IMR-90 (cell line): ENCODE measurements at regions of chr18 and their contacts with region 1.

Region 1: DNA sequence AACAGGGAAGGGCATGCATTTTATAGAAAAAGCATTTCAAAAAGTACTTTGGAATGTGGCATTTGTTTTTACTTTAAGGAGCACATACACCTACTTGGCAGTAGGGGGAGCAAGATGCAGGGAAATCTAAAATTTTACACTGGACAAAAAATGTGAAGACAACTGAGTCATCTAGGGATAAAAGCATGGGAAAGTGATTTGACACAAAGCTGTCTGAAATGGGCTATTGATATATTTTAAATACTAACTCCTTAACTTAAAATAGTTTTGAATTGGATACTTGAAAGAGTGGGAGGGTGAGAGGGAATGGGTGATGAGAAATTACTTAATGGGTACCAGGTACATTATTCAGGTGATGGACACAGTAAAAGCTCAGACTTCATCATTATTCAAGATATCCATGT is 15.8 kb downstream of the TMEM200C start:
- DNase-seq: peak; percentile 65
- ATAC-seq: peak; percentile 89
- H3K4me3 ChIP-seq: no peak overlapping the region
- H3K27ac ChIP-seq: no peak overlapping the region
- H3K4me1 ChIP-seq: no peaks in the 10 kb centered on the region
- H3K27me3 ChIP-seq: peaks cover 3% of the 10 kb centered on the region
- CTCF ChIP-seq: peak; percentile 93
- POLR2A ChIP-seq: no peak
- RAD21 ChIP-seq: peak; percentile 93

Region 2: DNA sequence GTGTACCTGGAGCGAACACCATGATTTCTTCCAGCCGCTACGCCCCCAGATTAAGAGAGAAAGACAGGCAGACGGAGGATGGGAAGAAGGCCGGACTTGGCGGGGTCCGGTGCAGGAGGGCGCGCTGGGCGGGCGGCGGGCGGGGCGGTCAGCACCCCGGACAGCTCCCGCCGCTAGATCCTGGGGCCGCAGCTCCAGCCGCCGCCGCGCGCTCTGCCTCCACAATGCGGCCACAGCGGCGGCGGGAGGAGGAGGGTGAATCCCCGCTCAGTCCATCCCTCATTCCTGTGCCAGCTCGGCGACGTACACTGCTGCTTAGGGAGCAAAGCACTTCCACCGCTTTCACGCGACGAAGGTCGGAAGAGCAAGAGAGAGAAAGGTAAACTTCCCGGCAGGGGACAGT is 682.4 kb before region 1 on chr18 and contains the start of gene AKAIN1:
- CTCF ChIA-PET with region 1: no interaction called
- POLR2A ChIA-PET with region 1: no interaction called
- dilution Hi-C with region 1: no loop called
- in situ Hi-C with region 1: no loop called
- intact Hi-C with region 1: no loop called
- DNase-seq: peak; percentile 18
- ATAC-seq: peak; percentile 100
- H3K4me3 ChIP-seq: no peak within 1 kb of the TSS
- H3K27ac ChIP-seq: no peak within 1 kb of the TSS
- H3K4me1 ChIP-seq: no peaks in the 10 kb centered on the region
- H3K27me3 ChIP-seq: peaks cover 6% of the 10 kb centered on the region; the same call in 1 of the 2 replicates
- CTCF ChIP-seq: no peak
- POLR2A ChIP-seq: no peak
- RAD21 ChIP-seq: no peak
- total RNA-seq, gene AKAIN1: not detected in 2 replicates

Region 3: GRCh38 chr18:6401687-6402086 is 522.2 kb after region 1 on chr18:
- CTCF ChIA-PET with region 1: no interaction called
- POLR2A ChIA-PET with region 1: no interaction called
- dilution Hi-C with region 1: no loop called
- in situ Hi-C with region 1: no loop called
- intact Hi-C with region 1: loop called (anchors 10 kb)
- DNase-seq: no peak
- ATAC-seq: no peak; the same call in 1 of the 2 replicates
- H3K4me3 ChIP-seq: no peak overlapping the region
- H3K27ac ChIP-seq: no peak overlapping the region
- H3K4me1 ChIP-seq: no peaks in the 10 kb centered on the region
- H3K27me3 ChIP-seq: no peaks in the 10 kb centered on the region
- CTCF ChIP-seq: peak; percentile 14; the same call in 1 of the 2 replicates
- POLR2A ChIP-seq: no peak
- RAD21 ChIP-seq: no peak

Region 4: DNA sequence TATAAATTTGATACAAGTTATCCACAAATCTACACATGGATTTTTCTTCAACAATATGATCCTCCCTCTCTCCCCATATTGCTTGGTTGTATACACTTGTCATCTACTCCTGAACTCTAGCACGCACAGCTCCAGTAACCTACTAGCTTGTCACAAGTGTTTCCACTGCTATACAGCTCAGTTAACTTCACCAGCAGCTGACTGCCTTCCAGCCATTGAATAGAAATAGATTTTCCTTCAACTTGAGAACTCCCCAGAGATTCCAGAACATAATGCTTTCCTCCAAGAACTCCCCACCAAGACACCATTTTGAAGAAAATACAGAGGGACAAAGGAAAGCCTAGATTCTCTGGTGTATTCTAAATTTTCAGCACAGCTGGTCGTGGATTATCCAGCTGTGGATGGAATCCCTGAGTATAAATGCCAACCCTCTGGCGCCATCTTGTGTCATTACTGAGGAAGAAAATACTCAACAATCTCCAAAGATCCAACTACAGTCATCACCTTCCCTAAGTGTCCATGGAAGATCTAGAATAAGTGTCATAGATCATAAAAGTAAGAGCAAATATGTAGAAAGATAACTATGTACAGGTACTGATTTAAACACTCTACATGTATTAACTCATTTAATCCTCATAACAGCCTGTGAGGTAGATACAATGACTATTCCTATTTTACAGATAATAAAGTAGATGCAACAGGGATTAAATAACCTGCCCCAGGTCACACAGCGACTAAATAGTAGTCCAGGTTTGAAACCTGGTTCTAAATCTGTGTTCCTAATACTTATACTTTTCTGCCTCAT is 1006.7 kb after region 1 on chr18:
- CTCF ChIA-PET with region 1: no interaction called
- POLR2A ChIA-PET with region 1: no interaction called
- dilution Hi-C with region 1: no loop called
- in situ Hi-C with region 1: loop called (anchors 10 kb)
- intact Hi-C with region 1: loop called (anchors 5 kb)
- DNase-seq: peak; percentile 59
- ATAC-seq: peak; percentile 83
- H3K4me3 ChIP-seq: no peak overlapping the region
- H3K27ac ChIP-seq: no peak overlapping the region; the same call in 1 of the 2 replicates
- H3K4me1 ChIP-seq: peaks cover 3% of the 10 kb centered on the region
- H3K27me3 ChIP-seq: no peaks in the 10 kb centered on the region
- CTCF ChIP-seq: peak; percentile 88
- POLR2A ChIP-seq: 0 out of 2 replicates have a peak, but pooled peaks have one; percentile 40
- RAD21 ChIP-seq: peak; percentile 97

Region 5: DNA sequence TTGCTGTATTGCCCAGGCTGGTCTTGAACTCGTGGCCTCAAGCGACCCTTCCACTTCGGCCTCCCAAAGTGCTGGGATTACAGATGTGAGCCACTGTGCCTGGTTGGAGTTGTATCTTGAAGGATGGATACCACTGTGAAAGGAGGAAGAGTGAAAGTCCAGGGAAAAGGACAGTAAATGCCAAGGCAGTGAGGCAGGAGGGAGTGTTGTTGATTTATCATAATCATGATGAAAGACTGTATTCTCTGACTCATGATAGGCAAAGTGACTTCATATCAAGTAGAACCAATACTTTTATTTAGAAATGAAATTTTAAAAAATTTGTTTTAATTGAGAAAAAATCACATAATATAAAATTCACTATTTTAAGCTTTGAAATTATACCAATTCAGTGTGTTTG is 1012.3 kb after region 1 on chr18:
- CTCF ChIA-PET with region 1: no interaction called
- POLR2A ChIA-PET with region 1: no interaction called
- dilution Hi-C with region 1: no loop called
- in situ Hi-C with region 1: loop called (anchors 10 kb)
- intact Hi-C with region 1: loop called (anchors 5 kb)
- DNase-seq: peak; percentile 56
- ATAC-seq: peak; percentile 64; the same call in 1 of the 2 replicates
- H3K4me3 ChIP-seq: no peak overlapping the region
- H3K27ac ChIP-seq: no peak overlapping the region
- H3K4me1 ChIP-seq: no peaks in the 10 kb centered on the region; the same call in 1 of the 2 replicates
- H3K27me3 ChIP-seq: no peaks in the 10 kb centered on the region
- CTCF ChIP-seq: no peak
- POLR2A ChIP-seq: no peak
- RAD21 ChIP-seq: no peak